ENCODE measurements at regions of chr17 and their contacts with region 1.

Region 1: GRCh38 chr17:2711601-2712299 is at the start of gene CLUH:
- DNase-seq: peak; percentile 98
- H3K4me3 Mint-ChIP-seq: peak within 1 kb of the TSS; percentile 92
- H3K27ac Mint-ChIP-seq: peak within 1 kb of the TSS; percentile 94
- H3K4me1 Mint-ChIP-seq: peaks cover 29% of the 10 kb centered on the region
- H3K27me3 Mint-ChIP-seq: no peaks in the 10 kb centered on the region
- CTCF ChIP-seq: no peak
- total RNA-seq, gene CLUH: 66.6 and 80.4 TPM in 2 replicates

Region 2: GRCh38 chr17:2613089-2613808 is 98.5 kb before region 1 on chr17:
- CTCF ChIA-PET with region 1: no interaction called
- POLR2A ChIA-PET with region 1: no interaction called
- intact Hi-C with region 1: no loop called
- DNase-seq: no peak
- H3K4me3 Mint-ChIP-seq: no peak overlapping the region
- H3K27ac Mint-ChIP-seq: no peak overlapping the region
- H3K4me1 Mint-ChIP-seq: peaks cover 21% of the 10 kb centered on the region
- H3K27me3 Mint-ChIP-seq: no peaks in the 10 kb centered on the region
- CTCF ChIP-seq: no peak

Region 3: GRCh38 chr17:2685696-2686095 is 26.1 kb before region 1 on chr17:
- CTCF ChIA-PET with region 1: no interaction called
- POLR2A ChIA-PET with region 1: interaction called, 10 read pairs
- intact Hi-C with region 1: no loop called
- DNase-seq: no peak
- H3K4me3 Mint-ChIP-seq: no peak overlapping the region
- H3K27ac Mint-ChIP-seq: no peak overlapping the region
- H3K4me1 Mint-ChIP-seq: no peaks in the 10 kb centered on the region
- H3K27me3 Mint-ChIP-seq: no peaks in the 10 kb centered on the region
- CTCF ChIP-seq: no peak

Measured in MCF 10A (cell line).